ENCODE measurements at regions of chr14 and their contacts with region 1.

Region 1: DNA sequence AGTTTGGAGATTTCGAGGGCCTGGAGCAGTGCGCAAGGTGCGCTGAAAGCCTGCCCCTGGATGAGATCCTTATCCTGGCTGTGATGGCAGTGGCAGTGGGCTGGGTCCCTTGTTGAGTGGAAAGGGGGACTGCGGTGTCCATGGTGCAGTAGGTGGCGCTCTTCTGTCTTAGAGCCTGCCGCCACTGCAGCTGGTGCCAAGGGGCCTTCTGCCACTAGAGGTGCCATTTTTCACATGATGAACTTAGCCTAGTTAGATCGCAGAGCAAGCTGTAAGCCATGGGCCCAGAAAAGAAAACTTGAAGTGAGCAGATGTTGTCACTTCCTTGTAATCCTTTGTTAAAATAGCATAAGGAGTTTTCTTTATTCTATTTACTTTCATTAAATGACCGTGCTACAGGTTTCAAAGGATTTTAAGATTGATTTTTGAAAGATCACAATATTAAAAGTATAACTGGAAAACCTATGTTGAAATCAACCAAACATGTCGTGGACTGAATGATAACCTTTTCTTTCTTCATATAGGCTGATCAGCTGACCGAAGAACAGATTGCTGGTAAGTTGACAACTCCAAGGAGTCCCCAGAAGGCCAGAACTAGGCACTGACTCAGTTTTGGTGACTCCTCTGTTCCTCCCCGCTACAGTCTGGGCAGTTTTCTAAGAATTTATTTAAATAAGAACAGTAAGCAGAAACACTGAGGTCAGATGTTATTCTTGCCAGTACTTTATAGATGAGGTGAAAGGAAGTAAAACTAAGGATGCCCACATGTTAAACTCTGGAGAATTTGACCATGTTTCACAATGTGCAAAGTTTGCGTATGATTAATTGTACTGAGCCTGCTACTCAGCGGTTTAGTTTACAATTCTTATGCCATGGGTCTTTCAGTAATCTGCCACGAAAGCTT is 3.0 kb downstream of the CALM1 start:
- DNase-seq: peak; percentile 83 to 91 (median 89)
- H3K4me3 ChIP-seq: no peak overlapping the region
- H3K27ac ChIP-seq: peak overlapping the region in 1 of 2 donors; percentile 23
- H3K4me1 ChIP-seq: peaks cover 9% of the 10 kb centered on the region
- H3K27me3 ChIP-seq: no peaks in the 10 kb centered on the region
- CTCF ChIP-seq: peak; percentile 91 to 98 (median 97)
- EP300 ChIP-seq: no peak
- POLR2A ChIP-seq: no peak

Region 2: GRCh38 chr14:90301668-90302090 is 98.1 kb before region 1 on chr14:
- intact Hi-C with region 1: loop called in 1 of 4 experiments (anchors 10 kb)
- DNase-seq: no peak
- H3K4me3 ChIP-seq: no peak overlapping the region
- H3K27ac ChIP-seq: peak overlapping the region in 1 of 2 donors; percentile 30
- H3K4me1 ChIP-seq: peaks cover 7% of the 10 kb centered on the region
- H3K27me3 ChIP-seq: no peaks in the 10 kb centered on the region
- CTCF ChIP-seq: peak in 2 of 3 donors; percentile 32 to 35
- EP300 ChIP-seq: no peak
- POLR2A ChIP-seq: no peak

Region 3: GRCh38 chr14:90331497-90332435 is 68.0 kb before region 1 on chr14 and contains the start of gene NRDE2:
- intact Hi-C with region 1: loop called in 1 of 4 experiments (anchors 5 kb)
- DNase-seq: peak; percentile 98 to 100 (median 99)
- H3K4me3 ChIP-seq: peak within 1 kb of the TSS; percentile 59
- H3K27ac ChIP-seq: peak within 1 kb of the TSS; percentile 46 to 55
- H3K4me1 ChIP-seq: peaks cover 7% of the 10 kb centered on the region
- H3K27me3 ChIP-seq: no peaks in the 10 kb centered on the region
- CTCF ChIP-seq: no peak
- EP300 ChIP-seq: no peak
- POLR2A ChIP-seq: no peak
- total RNA-seq, gene NRDE2: 9.9 to 28.5 (median 16.3) TPM

Region 4: DNA sequence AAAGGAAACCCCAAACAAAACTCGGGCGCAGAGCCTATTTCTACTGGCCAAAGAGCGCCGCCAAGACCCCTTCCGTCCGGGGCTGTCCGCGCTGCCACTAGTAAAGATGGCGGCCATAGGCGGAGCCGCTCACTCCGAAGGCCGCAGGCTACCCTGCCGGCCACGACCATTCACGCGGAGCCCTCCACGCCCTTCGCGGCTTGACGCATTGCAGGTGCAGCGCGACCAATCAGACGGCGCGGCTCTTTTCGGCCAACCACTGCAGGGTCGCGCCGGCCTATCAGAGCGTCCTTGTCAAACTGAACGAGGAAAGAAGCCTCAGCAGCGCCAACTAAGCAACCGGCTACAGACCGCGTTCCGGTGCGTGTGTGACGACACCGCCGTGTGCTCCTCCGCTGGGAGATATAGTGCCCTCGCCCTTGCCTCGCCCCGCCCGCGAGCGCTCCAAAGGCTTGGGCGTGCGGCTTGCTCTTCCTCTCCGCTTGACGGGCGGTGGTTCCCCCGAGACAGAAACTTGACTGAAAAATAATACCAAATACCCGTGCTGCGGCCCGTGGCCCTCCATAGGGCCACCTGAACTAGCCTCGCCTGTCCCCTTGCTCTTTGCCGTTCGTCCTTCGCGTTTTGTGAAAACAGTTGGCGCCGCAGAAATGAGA is 16.6 kb before region 1 on chr14:
- intact Hi-C with region 1: loop called in 2 of 4 experiments (anchors 1 to 2 kb)
- DNase-seq: peak; percentile 99 to 100 (median 100)
- H3K4me3 ChIP-seq: peak overlapping the region; percentile 66
- H3K27ac ChIP-seq: peak overlapping the region; percentile 95
- H3K4me1 ChIP-seq: peaks cover 3% of the 10 kb centered on the region
- H3K27me3 ChIP-seq: no peaks in the 10 kb centered on the region
- CTCF ChIP-seq: peak in 2 of 3 donors; percentile 28 to 33
- EP300 ChIP-seq: no peak
- POLR2A ChIP-seq: peak; percentile 97

Region 5: GRCh38 chr14:90522571-90523191 is 122.9 kb after region 1 on chr14:
- intact Hi-C with region 1: loop called in 1 of 4 experiments (anchors 5 kb)
- DNase-seq: peak; percentile 70 to 95 (median 89)
- H3K4me3 ChIP-seq: no peak overlapping the region
- H3K27ac ChIP-seq: peak overlapping the region; percentile 31 to 72
- H3K4me1 ChIP-seq: peaks cover 21% of the 10 kb centered on the region
- H3K27me3 ChIP-seq: no peaks in the 10 kb centered on the region
- CTCF ChIP-seq: no peak
- EP300 ChIP-seq: no peak
- POLR2A ChIP-seq: no peak

Region 6: DNA sequence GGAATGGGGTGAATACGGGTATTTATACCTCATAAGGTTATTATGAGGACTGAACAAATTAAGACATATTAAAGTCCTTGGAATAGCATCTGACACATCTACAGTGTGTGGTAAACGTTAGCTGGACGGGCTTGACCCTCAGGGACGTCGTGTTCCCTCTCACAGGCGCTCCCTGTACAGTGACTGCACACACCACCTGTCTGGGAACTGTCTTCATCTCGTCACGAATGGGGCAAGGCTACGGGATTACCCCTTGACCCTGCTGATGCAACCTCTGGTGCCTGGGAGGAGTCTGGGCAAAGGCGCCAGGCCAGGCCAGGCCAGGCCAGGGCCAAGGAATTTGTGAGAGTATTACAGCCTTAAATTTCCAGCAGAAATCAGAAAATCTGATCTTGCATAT is 188.1 kb after region 1 on chr14:
- intact Hi-C with region 1: no loop called
- DNase-seq: no peak
- H3K4me3 ChIP-seq: no peak overlapping the region
- H3K27ac ChIP-seq: no peak overlapping the region
- H3K4me1 ChIP-seq: no peaks in the 10 kb centered on the region
- H3K27me3 ChIP-seq: no peaks in the 10 kb centered on the region
- CTCF ChIP-seq: no peak
- EP300 ChIP-seq: no peak
- POLR2A ChIP-seq: no peak

Region 7: GRCh38 chr14:90697577-90698206 is 297.9 kb after region 1 on chr14:
- intact Hi-C with region 1: loop called (anchors 2 to 5 kb)
- DNase-seq: peak; percentile 81 to 89 (median 86)
- H3K4me3 ChIP-seq: no peak overlapping the region
- H3K27ac ChIP-seq: peak overlapping the region in 1 of 2 donors; percentile 70
- H3K4me1 ChIP-seq: peaks cover 5% of the 10 kb centered on the region
- H3K27me3 ChIP-seq: no peaks in the 10 kb centered on the region
- CTCF ChIP-seq: peak; percentile 82 to 87 (median 84)
- EP300 ChIP-seq: no peak
- POLR2A ChIP-seq: no peak

Region 8: DNA sequence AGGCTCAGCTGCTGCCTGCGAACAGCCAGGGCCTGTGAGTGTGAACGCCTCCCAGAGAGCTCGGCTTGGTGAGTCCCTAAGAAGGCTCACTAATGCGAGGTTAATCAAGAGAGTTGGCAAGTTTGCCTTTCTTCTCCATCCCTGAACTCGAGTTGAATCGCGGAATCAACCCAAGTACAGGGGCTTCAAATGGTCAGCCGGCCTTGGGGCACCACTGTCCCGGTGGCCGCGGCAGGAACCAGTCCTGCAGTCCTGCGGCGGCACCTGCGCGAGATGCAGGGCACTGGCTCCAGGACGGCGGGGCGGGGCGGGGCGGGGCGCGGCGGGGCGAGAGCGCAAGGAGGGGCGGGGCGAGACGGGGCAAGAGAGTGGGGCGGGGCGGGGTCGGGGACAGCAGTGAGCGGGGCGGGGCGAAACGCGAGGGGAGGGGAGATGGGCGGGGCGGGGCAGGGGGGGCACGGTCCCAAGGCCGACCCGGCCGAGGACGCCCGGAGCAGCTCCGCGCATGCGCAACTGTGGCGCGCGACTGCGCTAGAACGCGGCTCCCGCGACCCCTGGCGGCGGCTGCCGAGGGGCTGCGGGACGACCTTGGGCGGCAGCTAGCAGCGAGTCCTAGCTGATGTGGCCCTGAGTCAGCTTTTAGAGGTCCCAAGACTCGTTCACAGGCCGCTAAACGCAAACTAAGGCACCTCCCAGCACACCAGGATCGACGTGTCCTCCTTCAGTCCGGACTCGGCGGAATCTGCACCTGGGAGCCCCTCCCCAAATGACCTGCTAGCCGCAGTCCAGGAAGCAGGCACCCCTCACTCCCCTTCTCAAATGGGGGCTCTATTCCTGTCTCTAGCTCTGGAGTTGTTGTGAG is 358.5 kb after region 1 on chr14:
- intact Hi-C with region 1: loop called in 3 of 4 experiments (anchors 5 to 10 kb)
- DNase-seq: peak; percentile 90 to 96 (median 94)
- H3K4me3 ChIP-seq: peak overlapping the region; percentile 42
- H3K27ac ChIP-seq: peak overlapping the region; percentile 68 to 81
- H3K4me1 ChIP-seq: peaks cover 7% of the 10 kb centered on the region
- H3K27me3 ChIP-seq: no peaks in the 10 kb centered on the region
- CTCF ChIP-seq: peak; percentile 91 to 97 (median 93)
- EP300 ChIP-seq: no peak
- POLR2A ChIP-seq: peak; percentile 53

Region 9: GRCh38 chr14:90970167-90970600 is 570.4 kb after region 1 on chr14:
- intact Hi-C with region 1: no loop called
- DNase-seq: no peak
- H3K4me3 ChIP-seq: no peak overlapping the region
- H3K27ac ChIP-seq: no peak overlapping the region
- H3K4me1 ChIP-seq: no peaks in the 10 kb centered on the region
- H3K27me3 ChIP-seq: no peaks in the 10 kb centered on the region
- CTCF ChIP-seq: no peak
- EP300 ChIP-seq: no peak
- POLR2A ChIP-seq: no peak

Measured in ovary (tissue), 10 donors.